ENCODE measurements at regions of chr11 and their contacts with region 1.

Region 1: DNA sequence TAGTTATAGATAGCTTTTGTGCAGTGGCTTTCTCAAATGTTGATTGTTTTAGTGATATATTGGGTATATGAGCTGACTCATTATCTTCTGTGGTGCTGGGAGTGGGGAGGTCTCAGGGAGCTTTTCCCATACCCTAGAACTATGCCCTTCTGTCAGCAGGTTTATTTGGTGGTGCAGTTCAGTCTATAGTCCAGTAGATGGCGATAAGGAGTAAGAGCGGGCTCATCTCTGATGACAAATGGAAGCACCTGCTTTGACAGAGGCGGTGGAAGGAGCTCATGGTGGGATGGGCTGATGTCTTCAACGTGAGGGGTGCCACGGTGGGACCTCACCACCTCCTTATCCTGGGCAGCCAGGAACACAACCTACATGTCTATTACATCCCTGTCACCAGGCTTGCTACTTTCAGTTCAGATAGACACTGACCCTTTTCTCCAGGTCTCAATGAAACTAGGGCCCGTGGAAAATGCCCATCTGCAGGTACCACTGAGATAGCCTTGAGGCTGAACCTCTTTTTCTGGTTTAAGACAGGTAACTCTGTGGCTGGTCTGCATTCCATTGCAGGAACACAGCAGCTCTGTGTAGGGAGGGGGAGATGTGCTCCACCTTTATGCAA is 13.0 kb upstream of the OR6A2 start:
- DNase-seq: peak; percentile 64
- H3K4me3 Mint-ChIP-seq: no peak overlapping the region
- H3K27ac Mint-ChIP-seq: no peak overlapping the region
- H3K4me1 Mint-ChIP-seq: no peaks in the 10 kb centered on the region
- H3K27me3 Mint-ChIP-seq: peaks cover 22% of the 10 kb centered on the region
- CTCF ChIP-seq: peak; percentile 91

Region 2: DNA sequence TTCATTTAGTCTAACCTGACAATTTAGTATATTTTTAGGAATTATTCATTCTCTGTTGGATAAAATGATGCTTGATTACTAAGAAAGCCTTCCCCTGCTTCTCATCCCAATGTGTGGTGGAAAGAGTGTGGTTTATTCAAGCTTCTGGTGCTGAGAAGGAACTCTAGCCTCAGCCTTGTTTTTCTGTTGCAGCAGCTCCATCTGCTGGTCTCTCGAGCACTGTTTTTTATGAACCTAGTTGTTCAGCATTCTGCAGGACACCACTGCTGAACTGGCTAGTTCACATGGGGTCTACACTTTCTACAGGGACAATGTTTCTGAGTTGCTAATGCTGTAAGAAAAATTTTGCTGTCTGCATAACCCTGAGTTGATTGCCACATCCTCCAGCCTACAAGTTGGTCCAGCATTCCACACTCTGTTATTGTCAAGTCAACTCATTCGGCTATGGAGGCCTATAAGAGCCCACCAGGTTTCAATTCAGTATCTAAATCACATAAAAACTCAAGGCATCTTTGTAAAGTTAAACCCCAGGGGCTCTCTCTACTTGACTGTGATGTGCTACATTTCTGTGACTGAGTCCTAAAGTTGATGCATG is 55.0 kb before region 1 on chr11:
- CTCF ChIA-PET with region 1: interaction called, 12 read pairs
- POLR2A ChIA-PET with region 1: no interaction called
- intact Hi-C with region 1: no loop called
- DNase-seq: peak; percentile 55
- H3K4me3 Mint-ChIP-seq: no peak overlapping the region
- H3K27ac Mint-ChIP-seq: no peak overlapping the region
- H3K4me1 Mint-ChIP-seq: no peaks in the 10 kb centered on the region
- H3K27me3 Mint-ChIP-seq: no peaks in the 10 kb centered on the region
- CTCF ChIP-seq: peak; percentile 49

Region 3: DNA sequence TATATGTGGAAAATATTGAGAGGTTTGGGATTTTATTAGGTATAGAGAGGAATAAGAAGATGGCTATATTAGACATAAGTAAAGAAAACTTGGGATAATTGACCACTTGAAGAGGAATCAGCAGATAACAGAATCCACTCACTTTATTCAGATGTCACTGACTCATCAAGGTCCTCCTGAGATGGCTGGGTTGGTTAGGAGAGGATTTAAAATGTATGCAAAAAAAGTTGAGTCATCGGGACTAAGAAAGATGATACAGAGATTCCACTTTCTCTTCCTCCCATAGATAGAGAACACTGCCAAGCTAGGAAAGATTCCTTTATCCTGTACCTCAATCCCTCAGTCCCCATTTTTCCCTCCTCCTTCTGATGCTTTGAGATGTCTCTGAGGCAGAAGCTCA is 13.1 kb before region 1 on chr11 and contains the start of gene OR6A2:
- CTCF ChIA-PET with region 1: interaction called, 17 read pairs
- POLR2A ChIA-PET with region 1: interaction called, 4 read pairs
- intact Hi-C with region 1: no loop called
- DNase-seq: no peak
- H3K4me3 Mint-ChIP-seq: no peak within 1 kb of the TSS
- H3K27ac Mint-ChIP-seq: no peak within 1 kb of the TSS
- H3K4me1 Mint-ChIP-seq: no peaks in the 10 kb centered on the region
- H3K27me3 Mint-ChIP-seq: no peaks in the 10 kb centered on the region
- CTCF ChIP-seq: no peak
- total RNA-seq, gene OR6A2: 0.17 and 0.28 TPM in 2 replicates

Region 4: DNA sequence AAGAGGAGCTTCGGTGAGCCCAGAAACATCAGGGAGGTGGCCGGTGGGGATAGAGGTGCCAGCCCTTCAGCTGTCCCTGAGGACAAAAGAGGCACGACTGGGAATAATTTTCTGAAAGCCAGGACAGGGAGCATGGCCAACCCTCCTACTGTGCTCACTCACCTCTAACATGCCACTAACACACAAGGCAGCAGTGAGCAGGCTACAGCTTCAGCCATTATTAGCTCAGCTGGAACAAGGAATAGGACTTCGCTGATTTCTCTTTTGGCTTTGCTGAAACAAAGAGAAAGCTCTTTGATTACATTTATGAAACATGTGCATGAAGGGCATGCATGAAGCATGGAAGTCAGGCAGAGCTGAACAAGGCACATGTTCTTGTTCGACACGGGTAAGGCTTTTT is 20.9 kb after region 1 on chr11:
- CTCF ChIA-PET with region 1: interaction called, 13 read pairs
- POLR2A ChIA-PET with region 1: no interaction called
- intact Hi-C with region 1: no loop called
- DNase-seq: no peak
- H3K4me3 Mint-ChIP-seq: no peak overlapping the region
- H3K27ac Mint-ChIP-seq: no peak overlapping the region
- H3K4me1 Mint-ChIP-seq: no peaks in the 10 kb centered on the region
- H3K27me3 Mint-ChIP-seq: no peaks in the 10 kb centered on the region
- CTCF ChIP-seq: no peak

Region 5: GRCh38 chr11:6926208-6927029 is 113.9 kb after region 1 on chr11 and contains the start of gene ZNF215:
- CTCF ChIA-PET with region 1: interaction called, 34 read pairs
- POLR2A ChIA-PET with region 1: no interaction called
- intact Hi-C with region 1: loop called (anchors 1 kb)
- DNase-seq: peak; percentile 90
- H3K4me3 Mint-ChIP-seq: peak within 1 kb of the TSS; percentile 98
- H3K27ac Mint-ChIP-seq: peak within 1 kb of the TSS; percentile 59
- H3K4me1 Mint-ChIP-seq: peaks cover 21% of the 10 kb centered on the region
- H3K27me3 Mint-ChIP-seq: no peaks in the 10 kb centered on the region
- CTCF ChIP-seq: no peak
- total RNA-seq, gene ZNF215: 9.2 and 11.1 TPM in 2 replicates

Region 6: DNA sequence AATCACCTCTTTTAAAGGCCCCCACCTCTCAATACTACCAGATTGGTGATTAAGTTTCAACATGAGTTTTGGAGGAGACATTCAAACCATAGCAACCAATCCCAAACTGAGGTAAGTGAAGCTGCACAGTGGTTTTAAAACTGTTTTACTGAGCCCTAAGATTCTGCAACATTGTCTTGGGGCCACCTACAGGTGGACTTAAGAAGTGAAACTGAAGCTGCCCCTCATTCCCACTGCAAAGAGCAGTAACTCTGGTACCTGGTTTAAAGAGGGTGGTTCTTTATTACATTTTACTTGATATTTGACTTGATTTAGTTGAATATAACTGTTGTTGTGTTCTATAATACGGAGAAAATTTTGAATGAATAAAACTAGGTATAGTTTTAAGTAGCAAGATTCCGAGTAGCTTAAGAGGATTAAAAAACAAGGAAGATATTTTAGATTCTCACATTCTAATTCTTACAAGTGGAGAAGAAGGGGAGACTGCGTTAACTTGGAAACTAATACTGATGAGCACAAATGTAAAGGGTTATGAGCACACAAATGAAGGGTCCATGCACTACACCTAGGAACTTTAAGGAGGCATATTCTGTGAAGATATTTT is 465.9 kb after region 1 on chr11:
- CTCF ChIA-PET with region 1: interaction called, 4 read pairs
- POLR2A ChIA-PET with region 1: no interaction called
- intact Hi-C with region 1: loop called (anchors 1 kb)
- DNase-seq: peak; percentile 48
- H3K4me3 Mint-ChIP-seq: no peak overlapping the region
- H3K27ac Mint-ChIP-seq: no peak overlapping the region
- H3K4me1 Mint-ChIP-seq: peaks cover 9% of the 10 kb centered on the region
- H3K27me3 Mint-ChIP-seq: no peaks in the 10 kb centered on the region
- CTCF ChIP-seq: peak; percentile 42

Measured in MCF 10A (cell line).